ENCODE measurements at regions of chr12 and their contacts with region 1.

Region 1: GRCh38 chr12:110613771-110614684 is at the start of gene TCTN1:
- DNase-seq: peak; percentile 99
- ATAC-seq: peak; percentile 99
- total RNA-seq, gene TCTN1: 26.9 TPM

Region 2: GRCh38 chr12:110639336-110640141 is 25.5 kb after region 1 on chr12:
- intact Hi-C with region 1: loop called (anchors 2 kb)
- DNase-seq: no peak
- ATAC-seq: no peak